ENCODE measurements at regions of chr10 and their contacts with region 1.

Region 1: GRCh38 chr10:4767033-4767814 is 58.8 kb upstream of the AKR1E2 start:
- DNase-seq: peak; percentile 52
- ATAC-seq: no peak
- H3K4me3 ChIP-seq: no peak overlapping the region
- H3K27ac ChIP-seq: peak overlapping the region; percentile 99
- H3K4me1 ChIP-seq: peaks cover 81% of the 10 kb centered on the region
- H3K27me3 ChIP-seq: no peaks in the 10 kb centered on the region
- CTCF ChIP-seq: peak; percentile 69

Region 2: DNA sequence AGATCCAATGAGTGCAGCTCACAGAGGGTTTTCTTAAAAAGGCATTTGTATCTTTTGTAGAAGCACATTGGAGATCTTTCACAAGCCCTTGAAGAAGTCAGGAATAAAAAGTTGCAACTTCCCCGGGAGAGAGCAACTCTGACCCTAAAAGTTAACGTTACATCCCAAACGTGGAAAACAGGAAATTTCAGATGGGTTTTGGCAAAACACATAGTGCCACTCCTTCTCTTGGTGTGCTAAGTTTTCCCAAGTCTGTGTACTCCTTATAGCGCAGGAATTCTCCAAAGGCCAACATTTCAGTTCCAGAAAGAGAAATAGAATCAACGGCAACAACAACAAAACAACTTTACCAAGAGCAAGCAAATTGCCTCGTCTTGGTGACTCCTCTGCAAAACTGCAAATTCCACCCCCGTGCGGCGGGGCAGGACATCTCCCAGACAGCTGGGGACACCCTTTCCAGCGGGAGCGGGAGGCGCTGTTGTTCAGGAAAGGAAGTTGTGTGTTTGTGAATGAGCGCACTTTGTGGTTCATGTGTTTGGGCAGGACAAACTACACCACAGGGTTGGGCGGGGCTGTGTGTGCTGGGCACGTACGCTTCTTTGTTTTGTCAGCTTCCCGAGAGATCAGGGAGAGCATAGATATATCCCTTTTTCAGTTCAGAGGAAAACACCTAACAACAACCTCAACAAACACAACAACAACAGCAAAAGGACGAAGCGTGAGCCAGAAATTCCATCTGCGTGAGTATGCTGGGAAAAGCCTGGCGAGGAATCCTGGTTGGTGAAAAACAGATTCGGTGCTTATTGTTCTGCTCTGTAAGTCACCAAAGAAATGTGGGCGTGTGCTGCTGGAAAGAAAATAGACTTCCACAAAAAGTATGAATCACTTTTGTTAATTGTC is 1299.9 kb before region 1 on chr10:
- CTCF ChIA-PET with region 1: no interaction called
- POLR2A ChIA-PET with region 1: no interaction called
- intact Hi-C with region 1: loop called (anchors 5 kb)
- DNase-seq: peak; percentile 86
- ATAC-seq: peak; percentile 45
- H3K4me3 ChIP-seq: peak overlapping the region; percentile 59
- H3K27ac ChIP-seq: peak overlapping the region; percentile 100
- H3K4me1 ChIP-seq: peaks cover 55% of the 10 kb centered on the region
- H3K27me3 ChIP-seq: no peaks in the 10 kb centered on the region
- CTCF ChIP-seq: peak; percentile 77

Region 3: DNA sequence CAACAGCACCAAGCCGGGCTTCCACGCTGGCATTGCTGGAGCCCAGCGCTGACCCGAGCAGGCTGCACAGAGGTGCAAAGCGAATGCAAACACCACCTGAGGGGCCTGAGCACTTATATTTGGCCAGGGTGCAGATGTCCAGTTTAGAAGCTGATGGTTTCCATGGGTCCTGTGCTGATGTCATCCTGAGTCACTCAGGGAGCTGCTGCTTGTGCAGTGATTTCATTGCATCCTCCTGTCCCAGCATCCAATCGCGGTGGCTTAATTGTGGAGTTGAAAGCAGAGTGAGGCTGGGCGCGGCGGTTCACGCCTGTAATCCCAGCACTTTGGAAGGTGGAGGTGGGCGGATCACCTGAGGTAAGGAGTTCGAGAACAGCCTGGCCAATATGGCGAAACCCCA is 572.0 kb before region 1 on chr10:
- CTCF ChIA-PET with region 1: no interaction called
- POLR2A ChIA-PET with region 1: no interaction called
- intact Hi-C with region 1: loop called (anchors 5 kb)
- DNase-seq: peak; percentile 78
- ATAC-seq: peak; percentile 48
- H3K4me3 ChIP-seq: no peak overlapping the region
- H3K27ac ChIP-seq: peak overlapping the region; percentile 100
- H3K4me1 ChIP-seq: peaks cover 37% of the 10 kb centered on the region
- H3K27me3 ChIP-seq: no peaks in the 10 kb centered on the region
- CTCF ChIP-seq: no peak

Region 4: GRCh38 chr10:4512671-4513240 is 254.5 kb before region 1 on chr10:
- CTCF ChIA-PET with region 1: no interaction called
- POLR2A ChIA-PET with region 1: no interaction called
- intact Hi-C with region 1: loop called (anchors 2 kb)
- DNase-seq: peak; percentile 54
- ATAC-seq: peak; percentile 58
- H3K4me3 ChIP-seq: no peak overlapping the region
- H3K27ac ChIP-seq: no peak overlapping the region
- H3K4me1 ChIP-seq: peaks cover 7% of the 10 kb centered on the region; the same call in 1 of the 2 replicates
- H3K27me3 ChIP-seq: no peaks in the 10 kb centered on the region
- CTCF ChIP-seq: peak; percentile 65

Region 5: DNA sequence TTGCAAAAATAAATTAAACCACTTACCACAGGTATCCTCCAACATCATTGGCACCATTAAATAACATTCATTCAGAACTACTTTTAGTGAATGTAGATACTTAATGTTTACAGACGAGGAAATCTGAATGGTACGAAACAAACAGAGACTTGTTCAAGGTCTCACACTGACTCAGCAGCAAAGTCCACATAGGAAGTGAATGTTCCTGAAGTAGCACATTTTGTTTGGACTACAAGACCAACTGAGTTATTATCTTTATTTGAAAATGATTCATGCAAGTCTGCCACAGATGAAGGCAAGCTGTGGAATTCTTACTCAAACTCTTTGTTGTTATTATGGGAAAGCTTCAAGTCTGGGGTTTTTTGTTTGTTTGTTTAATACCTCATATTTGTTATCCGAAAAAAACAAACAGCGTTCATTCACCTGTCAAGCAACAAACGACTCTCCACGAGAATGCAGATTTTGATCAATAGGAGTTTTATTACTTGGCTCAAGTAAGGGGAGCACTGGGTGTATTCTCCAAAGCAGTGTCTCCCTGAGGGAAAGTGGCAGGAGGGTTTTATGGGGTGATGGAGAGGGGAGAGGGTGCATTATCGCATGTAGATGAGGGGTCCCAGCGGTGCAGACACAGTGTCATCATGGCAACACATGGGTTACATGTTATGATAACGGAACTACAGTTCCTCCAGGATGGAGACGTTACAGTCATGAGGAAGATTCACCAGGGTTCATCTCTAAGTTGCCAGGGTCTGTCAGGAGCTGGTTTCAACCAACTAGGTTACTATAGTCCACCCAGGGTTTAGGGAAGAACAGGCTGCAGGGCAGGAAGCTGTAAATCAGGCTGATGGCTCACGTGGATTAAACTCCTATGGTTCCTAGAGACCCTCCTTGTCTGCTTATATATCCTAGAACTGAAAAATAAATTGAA is 88.9 kb before region 1 on chr10:
- CTCF ChIA-PET with region 1: interaction called, 4 read pairs
- POLR2A ChIA-PET with region 1: interaction called, 8 read pairs
- intact Hi-C with region 1: loop called (anchors 1 kb)
- DNase-seq: peak; percentile 80
- ATAC-seq: peak; percentile 87
- H3K4me3 ChIP-seq: peak overlapping the region; percentile 74
- H3K27ac ChIP-seq: peak overlapping the region; percentile 99
- H3K4me1 ChIP-seq: peaks cover 46% of the 10 kb centered on the region
- H3K27me3 ChIP-seq: no peaks in the 10 kb centered on the region
- CTCF ChIP-seq: no peak

Region 6: GRCh38 chr10:4704034-4704545 is 63.1 kb before region 1 on chr10:
- CTCF ChIA-PET with region 1: no interaction called
- POLR2A ChIA-PET with region 1: interaction called, 5 read pairs
- intact Hi-C with region 1: loop called (anchors 1 kb)
- DNase-seq: peak; percentile 90
- ATAC-seq: peak; percentile 97
- H3K4me3 ChIP-seq: no peak overlapping the region
- H3K27ac ChIP-seq: peak overlapping the region; percentile 93
- H3K4me1 ChIP-seq: peaks cover 43% of the 10 kb centered on the region
- H3K27me3 ChIP-seq: no peaks in the 10 kb centered on the region
- CTCF ChIP-seq: no peak